ENCODE measurements at regions of chr9 and their contacts with region 1.

Region 1: GRCh38 chr9:18208154-18209059 is 265.5 kb upstream of the ADAMTSL1 start:
- DNase-seq: peak in 1 of 2 donors; percentile 18
- H3K4me3 ChIP-seq: no peak overlapping the region
- CTCF ChIP-seq: no peak
- POLR2A ChIP-seq: no peak

Region 2: GRCh38 chr9:17810728-17811571 is 397.5 kb before region 1 on chr9:
- intact Hi-C with region 1: loop called (anchors 2 kb)
- DNase-seq: peak in 1 of 2 donors; percentile 43
- H3K4me3 ChIP-seq: no peak overlapping the region
- CTCF ChIP-seq: no peak
- POLR2A ChIP-seq: no peak